ENCODE measurements at regions of chr11 and their contacts with region 1.

Region 1: GRCh38 chr11:64240394-64241174 is at the start of gene FKBP2:
- DNase-seq: peak; percentile 98
- ATAC-seq: peak; percentile 76
- H3K4me3 Mint-ChIP-seq: peak within 1 kb of the TSS; percentile 89
- H3K27ac Mint-ChIP-seq: peak within 1 kb of the TSS; percentile 98
- H3K4me1 Mint-ChIP-seq: peaks cover 44% of the 10 kb centered on the region
- H3K27me3 Mint-ChIP-seq: no peaks in the 10 kb centered on the region
- total RNA-seq, gene FKBP2: 26.9 to 33.0 TPM

Region 2: DNA sequence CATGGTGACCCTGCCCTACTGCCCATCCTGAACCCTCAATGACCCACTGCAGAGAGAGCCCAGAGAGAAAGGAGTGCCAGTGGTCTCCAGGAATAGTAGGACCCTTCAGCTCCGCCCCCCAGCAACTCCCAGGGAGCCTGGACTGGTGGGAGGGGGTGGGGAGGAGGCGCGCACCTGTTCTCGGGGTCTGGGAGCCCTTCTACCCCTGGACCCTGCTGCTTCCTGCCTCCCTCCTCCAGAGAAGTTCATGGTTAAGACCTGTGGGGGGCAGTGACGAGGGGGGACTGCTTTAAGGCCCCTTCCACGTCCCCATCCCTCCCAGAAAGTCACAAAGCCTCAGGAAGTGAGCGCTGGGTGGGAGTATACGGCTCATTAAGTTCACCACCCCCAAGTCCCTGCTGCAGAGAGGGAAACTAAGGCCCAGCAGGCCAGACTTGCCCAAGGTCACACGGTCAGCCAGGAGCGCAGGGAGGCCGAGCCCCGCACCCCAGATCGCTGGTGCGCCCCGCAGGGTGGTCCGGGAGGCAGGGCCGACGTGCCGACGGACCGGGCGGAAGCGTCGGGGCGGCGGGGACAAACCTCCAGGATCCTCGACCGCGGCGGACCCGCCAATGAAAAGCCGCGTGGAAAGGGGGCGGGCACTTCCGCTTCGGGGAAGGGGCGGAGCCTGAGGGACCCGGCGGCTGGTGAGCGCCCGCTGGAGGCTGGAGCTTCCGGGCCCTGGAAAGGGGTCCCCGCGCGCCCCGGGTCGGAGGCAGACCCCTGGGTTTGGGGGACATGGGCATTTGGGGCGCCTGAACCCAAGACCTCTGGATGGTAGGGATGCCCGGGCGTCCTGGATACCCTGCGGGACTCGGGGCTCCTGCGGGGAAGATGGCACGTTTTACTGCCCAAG is 14.7 kb before region 1 on chr11 and contains the starts of genes NUDT22 and TRPT1:
- CTCF ChIA-PET with region 1: interaction called, 6 read pairs
- POLR2A ChIA-PET with region 1: interaction called, 58 read pairs
- DNase-seq: peak; percentile 95
- ATAC-seq: peak; percentile 68
- H3K4me3 Mint-ChIP-seq: peak within 1 kb of the TSS; percentile 88
- H3K27ac Mint-ChIP-seq: peak within 1 kb of the TSS; percentile 91
- H3K4me1 Mint-ChIP-seq: peaks cover 42% of the 10 kb centered on the region
- H3K27me3 Mint-ChIP-seq: no peaks in the 10 kb centered on the region
- total RNA-seq, gene NUDT22: 86.7 to 91.6 TPM
- total RNA-seq, gene TRPT1: 37.8 to 44.8 TPM